Activated naive CD4-positive, alpha-beta T cell treated with anti-CD3 and anti-CD28 coated beads for 36 hours (primary cell): ENCODE measurements at regions of chr12 and their contacts with region 1.

Region 1: DNA sequence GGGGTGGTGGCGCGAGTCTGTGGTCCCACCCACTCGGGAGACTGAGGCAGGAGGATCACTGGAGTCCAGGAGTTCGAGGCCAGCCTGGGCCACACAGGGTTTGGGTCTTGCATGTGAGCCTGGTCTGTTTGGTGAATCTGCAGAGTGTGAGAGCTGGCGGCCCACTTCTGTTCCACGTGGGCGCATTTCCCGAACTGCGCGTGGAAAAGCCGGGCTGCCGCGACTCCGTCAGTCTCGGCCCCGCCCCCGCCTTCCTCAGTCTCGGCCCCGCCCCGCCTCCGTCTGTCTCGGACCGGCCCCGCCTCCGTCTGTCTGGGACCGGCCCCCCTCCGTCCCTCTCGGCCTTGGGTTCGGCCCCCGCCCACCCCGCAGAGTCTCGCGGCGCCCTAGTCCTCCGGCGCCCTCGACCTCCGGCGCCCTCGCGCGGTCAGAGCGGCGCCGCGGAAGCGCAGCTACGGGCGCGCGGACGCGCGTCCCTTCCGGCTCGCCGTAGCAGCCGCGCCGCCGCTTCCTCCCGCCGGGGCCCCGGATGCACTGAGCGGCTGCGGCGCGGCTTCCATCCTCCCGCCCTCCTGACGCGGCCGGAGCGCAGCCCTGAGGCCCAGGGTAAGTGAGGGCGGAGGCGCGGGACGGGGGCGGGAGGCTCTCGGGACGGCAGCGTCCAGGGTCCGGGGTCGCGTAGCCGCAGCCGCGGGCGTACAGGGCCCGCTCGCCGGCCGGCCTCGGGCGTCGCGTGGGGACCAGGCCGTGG is at the start of gene EP400:
- DNase-seq: peak; percentile 94
- H3K4me3 Mint-ChIP-seq: peak within 1 kb of the TSS; percentile 91
- H3K27ac Mint-ChIP-seq: peak within 1 kb of the TSS; percentile 87
- H3K4me1 Mint-ChIP-seq: peaks cover 42% of the 10 kb centered on the region
- H3K27me3 Mint-ChIP-seq: no peaks in the 10 kb centered on the region
- total RNA-seq, gene EP400: 36.8 to 40.6 TPM

Region 2: DNA sequence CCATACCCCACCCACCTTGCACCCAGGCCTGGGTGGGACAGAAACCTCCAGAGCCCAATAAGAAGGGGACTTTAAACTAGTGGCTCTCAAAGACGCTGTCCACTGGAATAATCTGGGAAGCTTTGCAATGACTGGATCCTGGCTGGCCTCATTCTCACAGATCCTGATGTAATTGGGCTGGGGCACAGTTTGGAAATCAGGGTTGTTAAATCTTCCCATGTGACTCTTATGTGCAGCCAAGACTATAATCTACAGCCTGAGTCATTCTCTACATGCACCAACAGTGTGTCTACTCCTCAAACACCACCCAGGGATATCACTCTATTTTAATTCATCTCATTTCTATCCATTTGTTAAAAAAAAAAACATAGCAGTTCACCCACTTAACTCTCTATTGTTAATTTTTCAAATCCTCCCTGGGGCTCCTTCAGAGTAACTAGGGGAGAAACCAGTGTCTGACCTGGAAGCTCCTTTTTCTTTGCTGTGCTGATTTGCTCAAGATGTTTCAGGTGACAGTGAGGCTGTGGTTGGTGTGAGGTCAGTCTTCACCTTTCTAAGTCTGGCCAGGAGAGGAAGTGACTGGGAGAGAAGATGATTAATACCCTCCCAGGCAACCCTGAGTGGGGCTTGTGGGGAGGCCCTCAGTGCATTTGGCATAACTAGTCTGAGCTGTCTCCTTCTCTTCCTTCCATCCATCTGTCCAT is 450.3 kb before region 1 on chr12:
- CTCF ChIA-PET with region 1: no interaction called
- intact Hi-C with region 1: no loop called
- DNase-seq: no peak
- H3K4me3 Mint-ChIP-seq: no peak overlapping the region
- H3K27ac Mint-ChIP-seq: no peak overlapping the region
- H3K4me1 Mint-ChIP-seq: no peaks in the 10 kb centered on the region
- H3K27me3 Mint-ChIP-seq: no peaks in the 10 kb centered on the region

Region 3: GRCh38 chr12:131608740-131609690 is 340.6 kb before region 1 on chr12:
- CTCF ChIA-PET with region 1: no interaction called
- intact Hi-C with region 1: loop called (anchors 5 kb)
- DNase-seq: peak; percentile 78
- H3K4me3 Mint-ChIP-seq: no peak overlapping the region
- H3K27ac Mint-ChIP-seq: no peak overlapping the region
- H3K4me1 Mint-ChIP-seq: peaks cover 53% of the 10 kb centered on the region
- H3K27me3 Mint-ChIP-seq: no peaks in the 10 kb centered on the region

Region 4: DNA sequence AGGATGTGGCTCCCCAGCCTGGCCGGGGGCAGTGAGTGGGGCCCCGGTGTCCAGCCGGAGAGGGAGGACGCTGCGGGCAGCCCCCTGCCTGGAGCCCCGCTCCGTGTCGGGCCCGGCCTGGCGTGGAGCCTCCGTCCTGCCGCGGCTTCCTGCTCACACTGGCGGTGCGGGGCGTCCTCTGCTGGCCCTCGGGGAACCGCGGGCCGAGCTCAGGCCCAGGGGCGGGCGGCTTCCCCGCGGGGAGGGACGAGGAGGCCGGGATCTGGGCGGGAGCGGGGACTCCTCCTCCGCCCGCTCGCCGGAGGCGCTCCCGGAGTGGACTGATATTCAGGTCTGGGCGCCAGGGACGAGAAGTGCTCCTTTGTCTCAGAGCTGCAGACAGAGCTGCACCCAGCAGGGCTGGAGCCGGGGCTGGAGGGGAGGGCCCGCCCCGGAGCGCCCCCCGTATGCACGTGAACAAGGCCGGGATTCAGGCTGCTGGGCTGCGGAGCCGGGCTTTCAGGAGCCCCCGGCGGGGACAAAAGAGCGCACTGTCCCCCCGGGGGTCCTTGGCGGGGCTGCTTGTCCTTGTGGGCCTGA is 119.2 kb before region 1 on chr12:
- CTCF ChIA-PET with region 1: no interaction called
- intact Hi-C with region 1: loop called (anchors 2 kb)
- DNase-seq: peak; percentile 65
- H3K4me3 Mint-ChIP-seq: peak overlapping the region; percentile 43
- H3K27ac Mint-ChIP-seq: no peak overlapping the region
- H3K4me1 Mint-ChIP-seq: peaks cover 14% of the 10 kb centered on the region
- H3K27me3 Mint-ChIP-seq: peaks cover 44% of the 10 kb centered on the region

Region 5: DNA sequence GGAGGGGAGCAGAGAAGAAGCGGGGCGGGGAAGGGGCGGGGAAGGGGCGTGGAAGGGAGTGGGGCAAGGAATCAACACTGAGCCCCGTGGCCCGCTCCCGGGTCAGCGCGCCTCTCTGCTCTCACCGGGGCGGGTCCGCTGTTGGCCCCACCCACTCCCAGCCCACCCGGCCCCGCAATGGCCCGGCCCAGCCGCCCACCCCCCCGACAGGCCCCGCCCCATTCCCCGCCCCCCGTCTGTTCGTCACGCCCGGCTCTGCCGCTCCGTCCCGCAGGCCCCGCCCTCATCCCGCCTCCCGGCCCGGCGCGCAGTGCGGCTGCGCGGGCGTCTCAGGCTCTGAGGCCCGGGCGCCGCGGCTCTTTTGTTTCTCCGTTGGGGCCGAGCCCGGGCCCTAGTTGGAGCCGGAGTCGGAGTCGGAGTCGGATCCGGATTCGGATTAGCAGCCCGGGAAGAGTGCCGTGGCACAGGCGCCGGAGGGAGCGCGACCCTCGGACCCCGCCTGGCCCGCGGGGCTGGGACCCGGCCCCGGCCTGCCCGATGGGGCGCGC is 55.2 kb before region 1 on chr12 and contains the start of gene ULK1:
- CTCF ChIA-PET with region 1: no interaction called
- intact Hi-C with region 1: loop called (anchors 1 kb)
- DNase-seq: peak; percentile 91
- H3K4me3 Mint-ChIP-seq: peak within 1 kb of the TSS; percentile 79
- H3K27ac Mint-ChIP-seq: no peak within 1 kb of the TSS
- H3K4me1 Mint-ChIP-seq: peaks cover 15% of the 10 kb centered on the region
- H3K27me3 Mint-ChIP-seq: no peaks in the 10 kb centered on the region
- total RNA-seq, gene ULK1: 13.6 to 15.6 TPM

Region 6: DNA sequence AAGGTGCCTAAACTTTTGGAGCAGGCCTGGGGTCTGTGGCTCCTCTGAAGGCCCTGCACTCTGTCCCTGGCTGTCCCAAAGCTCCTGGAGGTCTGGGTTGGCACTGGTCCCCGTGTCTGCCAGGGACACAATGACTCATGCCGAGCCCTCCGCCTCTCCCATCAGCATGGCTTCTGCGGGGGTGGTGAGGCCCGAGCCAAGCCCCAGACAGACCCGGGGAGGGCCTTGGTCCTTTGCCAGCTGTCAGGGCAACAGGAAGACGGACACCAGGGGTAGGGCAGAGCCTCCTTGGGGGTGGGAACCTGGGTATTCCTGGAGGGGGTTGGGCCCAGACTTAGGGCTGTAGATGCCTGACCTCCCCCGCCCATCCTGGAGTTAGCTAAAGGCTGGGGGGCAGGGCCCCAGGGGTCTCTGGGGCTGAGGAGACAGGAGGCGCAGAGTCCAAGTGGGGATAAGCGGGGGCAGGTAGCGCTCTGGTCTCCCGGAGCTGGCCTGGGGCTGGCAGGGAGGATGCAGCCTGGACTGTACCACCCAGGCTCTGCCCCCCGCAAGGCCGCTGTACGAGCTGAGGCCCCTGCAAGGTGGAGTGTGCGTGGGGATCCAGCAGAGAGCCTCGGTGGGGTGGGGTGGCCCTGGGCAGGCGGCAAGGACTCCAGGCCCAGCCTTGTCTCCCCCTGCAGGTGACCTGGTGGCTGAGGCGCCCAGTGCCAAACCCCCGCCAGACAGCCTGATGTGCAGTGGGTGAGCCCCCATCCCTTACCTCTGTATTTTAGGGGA is 36.9 kb before region 1 on chr12:
- CTCF ChIA-PET with region 1: no interaction called
- intact Hi-C with region 1: no loop called
- DNase-seq: no peak
- H3K4me3 Mint-ChIP-seq: no peak overlapping the region
- H3K27ac Mint-ChIP-seq: no peak overlapping the region
- H3K4me1 Mint-ChIP-seq: no peaks in the 10 kb centered on the region
- H3K27me3 Mint-ChIP-seq: no peaks in the 10 kb centered on the region

Region 7: DNA sequence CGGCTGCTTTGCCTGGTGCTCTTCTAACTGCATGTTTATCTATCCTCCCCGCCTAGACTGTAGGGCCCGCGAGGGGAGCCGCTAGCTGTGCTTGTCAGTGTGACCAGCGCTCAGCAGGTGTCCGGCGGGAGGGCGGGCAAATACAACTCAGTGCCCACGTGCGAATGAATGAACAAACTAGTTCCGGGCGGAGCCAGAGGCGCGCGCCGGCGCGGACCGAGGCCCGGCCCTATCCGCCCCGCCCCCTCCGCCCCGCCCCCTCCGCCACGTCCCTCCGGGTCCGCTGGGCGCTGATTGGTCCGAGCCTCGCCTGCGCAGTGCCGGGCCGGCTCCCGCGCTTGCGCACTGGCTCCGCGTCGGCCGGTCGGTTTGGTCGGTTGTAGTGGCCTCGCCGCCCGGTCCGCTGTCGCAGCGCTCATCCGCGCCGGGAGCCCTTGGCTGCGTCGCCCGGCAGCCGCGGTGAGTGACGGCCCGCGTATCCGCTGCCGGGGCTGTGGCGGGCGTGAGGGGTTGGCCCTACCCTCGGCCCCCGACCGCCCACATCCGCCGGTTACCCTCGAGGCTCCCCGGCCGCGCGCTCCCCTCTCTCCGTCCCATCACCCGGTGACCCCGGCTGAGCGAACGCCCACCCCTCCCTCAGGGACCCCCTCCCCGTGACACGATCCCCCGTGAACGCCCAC is 134.5 kb after region 1 on chr12:
- CTCF ChIA-PET with region 1: no interaction called
- intact Hi-C with region 1: loop called (anchors 5 kb)
- DNase-seq: peak; percentile 87
- H3K4me3 Mint-ChIP-seq: peak overlapping the region; percentile 96
- H3K27ac Mint-ChIP-seq: peak overlapping the region; percentile 90
- H3K4me1 Mint-ChIP-seq: peaks cover 32% of the 10 kb centered on the region
- H3K27me3 Mint-ChIP-seq: no peaks in the 10 kb centered on the region

Region 8: DNA sequence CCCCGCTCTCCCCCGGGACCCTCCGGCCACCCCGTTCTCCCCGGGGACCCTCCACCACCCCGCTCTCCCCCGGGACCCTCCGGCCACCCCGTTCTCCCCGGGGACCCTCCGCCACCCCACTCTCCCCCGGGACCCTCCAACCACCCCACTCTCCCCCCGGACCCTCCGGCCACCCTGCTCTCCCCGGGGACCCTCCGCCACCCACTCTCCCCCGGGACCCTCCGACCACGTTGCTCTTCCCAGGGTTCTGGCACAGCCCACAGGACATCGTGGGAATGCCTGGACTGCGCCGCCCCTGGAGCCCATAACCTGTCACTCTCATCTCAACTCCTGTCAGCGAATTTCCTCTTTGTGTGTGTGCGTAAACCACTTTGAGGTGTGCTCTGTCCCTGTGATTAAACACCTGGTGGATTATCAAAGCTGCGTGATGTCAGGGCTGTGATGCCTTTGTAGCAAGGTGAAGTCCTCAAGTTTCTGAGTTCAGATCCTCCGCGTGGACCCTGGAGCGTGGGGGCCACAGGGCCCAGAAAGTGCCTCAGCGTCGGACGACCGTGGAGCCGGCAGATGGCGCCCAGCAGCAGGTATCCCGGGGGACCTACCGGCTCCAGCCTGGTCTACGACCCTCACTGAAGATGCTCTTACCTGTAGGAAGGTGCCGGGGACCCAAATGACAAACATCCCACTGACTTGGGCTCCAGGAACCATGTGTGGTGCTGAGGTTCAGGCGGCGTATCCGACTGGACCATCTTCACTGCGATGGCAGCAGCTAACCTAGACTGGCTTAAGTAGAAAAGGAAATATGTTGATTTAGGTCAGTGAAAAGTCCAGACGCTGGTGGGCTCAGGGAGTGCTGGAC is 443.0 kb after region 1 on chr12:
- CTCF ChIA-PET with region 1: no interaction called
- intact Hi-C with region 1: no loop called
- DNase-seq: no peak
- H3K4me3 Mint-ChIP-seq: no peak overlapping the region
- H3K27ac Mint-ChIP-seq: no peak overlapping the region
- H3K4me1 Mint-ChIP-seq: no peaks in the 10 kb centered on the region
- H3K27me3 Mint-ChIP-seq: peaks cover 6% of the 10 kb centered on the region